PC-3 (cell line): ENCODE measurements at regions of chr5 and their contacts with region 1.

Region 1: GRCh38 chr5:116068028-116068632 is 16.7 kb upstream of the COMMD10 start:
- DNase-seq: peak; percentile 61
- ATAC-seq: peak; percentile 45; the same call in 1 of the 2 replicates
- H3K4me3 ChIP-seq: no peak overlapping the region
- H3K27ac ChIP-seq: no peak overlapping the region
- H3K4me1 ChIP-seq: no peaks in the 10 kb centered on the region
- H3K27me3 ChIP-seq: no peaks in the 10 kb centered on the region
- CTCF ChIP-seq: peak; percentile 84

Region 2: DNA sequence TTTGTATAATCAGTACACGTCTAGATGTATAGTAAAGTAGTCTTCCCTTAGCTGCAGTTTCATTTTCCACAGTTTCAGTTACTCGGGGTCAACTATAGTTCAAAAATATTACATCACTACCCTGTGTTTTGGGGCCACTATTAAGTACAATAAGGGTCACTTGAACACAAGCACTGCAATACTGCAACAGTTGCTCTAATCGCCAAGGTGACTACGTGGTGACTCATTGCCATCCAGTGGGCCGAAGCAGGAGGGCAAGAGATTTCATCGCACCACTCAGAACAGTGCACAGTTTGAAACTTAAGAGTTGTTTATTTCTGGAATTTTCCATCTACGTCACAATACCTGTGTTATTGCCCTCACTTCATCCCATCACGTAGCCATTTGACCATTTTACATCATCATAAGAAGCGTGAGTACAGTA is 36.0 kb before region 1 on chr5 and contains the start of gene ARL14EPL:
- CTCF ChIA-PET with region 1: no interaction called
- POLR2A ChIA-PET with region 1: no interaction called
- intact Hi-C with region 1: loop called (anchors 1 kb)
- DNase-seq: peak; percentile 87
- ATAC-seq: peak; percentile 100
- H3K4me3 ChIP-seq: no peak within 1 kb of the TSS
- H3K27ac ChIP-seq: peak within 1 kb of the TSS; percentile 43
- H3K4me1 ChIP-seq: peaks cover 30% of the 10 kb centered on the region
- H3K27me3 ChIP-seq: no peaks in the 10 kb centered on the region
- CTCF ChIP-seq: peak; percentile 46; the same call in 1 of the 2 replicates
- total RNA-seq, gene ARL14EPL: not detected in 2 replicates